ENCODE measurements at regions of chr1 and their contacts with region 1.

Region 1: GRCh38 chr1:43367904-43368645 is at the start of gene ELOVL1:
- DNase-seq: peak; percentile 86
- H3K4me3 Mint-ChIP-seq: peak within 1 kb of the TSS; percentile 97
- H3K27ac Mint-ChIP-seq: peak within 1 kb of the TSS; percentile 88
- H3K4me1 Mint-ChIP-seq: peaks cover 35% of the 10 kb centered on the region
- H3K27me3 Mint-ChIP-seq: no peaks in the 10 kb centered on the region
- total RNA-seq, gene ELOVL1: 82.7 and 83.6 TPM in 2 replicates

Region 2: DNA sequence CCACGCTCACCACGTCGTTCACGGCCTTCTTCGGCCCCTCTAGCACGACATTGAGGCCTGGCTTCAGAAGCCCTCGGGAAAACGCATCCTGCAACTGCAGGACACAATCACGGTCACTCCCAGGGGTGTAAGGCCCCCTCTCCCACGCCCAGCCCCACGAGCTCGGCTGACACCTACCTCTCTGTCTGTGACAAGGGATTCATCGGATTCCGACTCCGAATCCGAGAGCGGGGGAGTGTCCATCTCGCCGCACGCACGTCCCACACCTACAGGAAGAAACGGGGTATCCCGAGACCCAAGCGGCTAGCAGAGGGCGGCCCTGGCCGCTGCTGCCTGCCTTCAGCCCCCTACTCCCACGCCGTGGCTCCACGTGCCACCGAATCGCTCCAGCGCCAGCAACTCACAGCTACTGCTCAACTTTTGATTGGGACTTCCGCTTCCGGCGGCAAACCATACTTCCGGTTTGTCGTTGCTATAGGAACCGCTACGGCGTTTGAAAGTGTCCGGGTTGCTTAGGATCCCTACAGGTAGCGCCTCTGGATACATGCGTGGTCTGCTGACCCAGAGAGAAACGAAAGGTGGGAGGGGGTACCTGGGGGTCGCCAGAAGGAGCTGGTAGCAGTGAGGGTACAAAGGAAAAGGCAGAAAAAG is 196.1 kb before region 1 on chr1 and contains the starts of genes CFAP57 and EBNA1BP2:
- intact Hi-C with region 1: loop called (anchors 5 kb)
- DNase-seq: peak; percentile 90
- H3K4me3 Mint-ChIP-seq: peak within 1 kb of the TSS; percentile 96
- H3K27ac Mint-ChIP-seq: peak within 1 kb of the TSS; percentile 87
- H3K4me1 Mint-ChIP-seq: peaks cover 25% of the 10 kb centered on the region
- H3K27me3 Mint-ChIP-seq: peaks cover 18% of the 10 kb centered on the region
- total RNA-seq, gene CFAP57: 0.11 and 0.16 TPM in 2 replicates
- total RNA-seq, gene EBNA1BP2: 102 and 104 TPM in 2 replicates

Region 3: DNA sequence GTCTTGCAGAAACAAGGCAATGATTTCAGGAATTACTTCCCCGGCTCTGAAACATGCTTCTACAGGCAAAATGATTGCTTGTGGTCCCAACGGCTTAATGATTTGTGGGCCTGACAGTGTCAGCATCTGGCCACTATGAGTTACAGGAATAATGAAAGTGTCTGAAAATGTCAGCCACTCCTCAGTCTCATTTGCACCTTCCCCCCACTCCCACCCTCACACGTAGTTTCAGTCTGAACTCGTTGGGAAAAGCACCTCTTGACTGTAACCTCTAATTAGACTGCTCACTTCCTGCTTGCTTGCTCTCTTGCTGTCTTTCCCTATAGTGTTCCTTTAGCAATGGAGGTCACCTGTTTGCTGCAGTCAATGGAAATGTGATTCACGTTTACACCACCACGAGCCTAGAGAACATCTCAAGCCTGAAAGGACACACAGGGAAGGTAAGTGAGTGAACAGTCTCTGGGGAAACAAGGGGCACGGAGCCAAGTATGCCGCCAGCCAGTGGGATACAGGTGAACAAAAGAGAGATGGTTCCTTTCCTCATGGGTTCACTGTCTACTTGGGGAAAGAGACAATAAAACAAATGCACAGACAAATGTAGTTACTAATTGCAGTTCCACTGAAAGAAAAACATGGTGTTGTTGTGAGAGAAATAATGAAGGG is 168.9 kb before region 1 on chr1:
- intact Hi-C with region 1: no loop called
- DNase-seq: no peak
- H3K4me3 Mint-ChIP-seq: no peak overlapping the region
- H3K27ac Mint-ChIP-seq: no peak overlapping the region
- H3K4me1 Mint-ChIP-seq: no peaks in the 10 kb centered on the region
- H3K27me3 Mint-ChIP-seq: peaks cover 9% of the 10 kb centered on the region

Region 4: DNA sequence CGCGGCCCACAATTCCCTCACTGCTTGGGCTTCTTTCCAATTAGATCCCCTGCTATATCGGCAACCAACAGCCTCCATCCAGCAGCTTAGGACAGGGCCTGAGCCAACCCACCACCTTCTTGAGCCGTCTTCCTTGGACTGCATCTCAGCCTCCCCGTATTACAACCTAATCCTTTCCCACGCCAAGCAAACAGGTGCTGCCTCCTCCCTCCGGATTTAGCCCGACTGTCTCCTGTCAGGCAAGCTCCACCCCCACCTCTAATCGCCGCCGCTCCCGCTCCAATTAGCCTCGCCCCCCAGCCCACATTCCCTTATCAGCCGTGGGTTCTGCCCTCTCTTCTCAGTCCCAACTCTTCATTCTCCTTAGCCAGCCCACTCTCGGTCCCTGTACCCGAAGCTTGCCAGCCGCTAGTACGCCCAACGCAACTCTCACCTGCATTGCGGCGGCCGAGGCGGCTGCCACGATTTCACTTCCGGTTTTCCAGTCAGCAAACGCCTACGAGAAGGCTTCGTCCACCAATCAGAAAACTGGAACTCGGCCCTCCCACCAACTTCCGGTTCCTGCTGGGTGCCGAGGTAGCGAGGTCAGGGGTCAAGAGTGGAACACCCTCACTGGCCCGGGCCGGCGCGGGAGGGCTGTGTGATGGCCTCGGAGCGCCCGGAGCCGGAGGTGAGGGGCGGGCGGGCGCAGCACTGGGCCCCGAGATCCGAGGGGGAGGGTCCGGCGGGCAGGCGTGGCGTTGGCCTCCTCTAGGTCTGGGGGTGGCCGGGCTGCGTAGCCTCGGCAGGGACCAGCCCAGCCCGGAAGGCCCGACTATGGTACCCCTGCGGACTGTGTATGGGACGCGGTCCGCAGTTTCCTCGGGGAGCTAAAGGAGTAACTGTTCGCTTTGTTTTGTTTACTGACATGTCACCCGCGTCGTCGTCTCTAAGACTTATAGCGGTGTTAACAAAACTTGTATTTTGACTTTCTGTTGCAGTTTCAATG is 21.5 kb after region 1 on chr1 and contains the starts of genes MED8 and SZT2:
- intact Hi-C with region 1: loop called (anchors 1 kb)
- DNase-seq: peak; percentile 91
- H3K4me3 Mint-ChIP-seq: peak within 1 kb of the TSS; percentile 100
- H3K27ac Mint-ChIP-seq: peak within 1 kb of the TSS; percentile 88
- H3K4me1 Mint-ChIP-seq: peaks cover 20% of the 10 kb centered on the region
- H3K27me3 Mint-ChIP-seq: no peaks in the 10 kb centered on the region
- total RNA-seq, gene MED8: 40.8 and 41.6 TPM in 2 replicates
- total RNA-seq, gene SZT2: 56.6 and 58.4 TPM in 2 replicates

Region 5: GRCh38 chr1:43414634-43415223 is 46.7 kb after region 1 on chr1:
- intact Hi-C with region 1: no loop called
- DNase-seq: peak; percentile 39
- H3K4me3 Mint-ChIP-seq: no peak overlapping the region
- H3K27ac Mint-ChIP-seq: no peak overlapping the region
- H3K4me1 Mint-ChIP-seq: no peaks in the 10 kb centered on the region
- H3K27me3 Mint-ChIP-seq: no peaks in the 10 kb centered on the region

Region 6: GRCh38 chr1:43427524-43427923 is 59.4 kb after region 1 on chr1:
- intact Hi-C with region 1: no loop called
- DNase-seq: no peak
- H3K4me3 Mint-ChIP-seq: no peak overlapping the region
- H3K27ac Mint-ChIP-seq: no peak overlapping the region
- H3K4me1 Mint-ChIP-seq: peaks cover 2% of the 10 kb centered on the region
- H3K27me3 Mint-ChIP-seq: no peaks in the 10 kb centered on the region

Region 7: DNA sequence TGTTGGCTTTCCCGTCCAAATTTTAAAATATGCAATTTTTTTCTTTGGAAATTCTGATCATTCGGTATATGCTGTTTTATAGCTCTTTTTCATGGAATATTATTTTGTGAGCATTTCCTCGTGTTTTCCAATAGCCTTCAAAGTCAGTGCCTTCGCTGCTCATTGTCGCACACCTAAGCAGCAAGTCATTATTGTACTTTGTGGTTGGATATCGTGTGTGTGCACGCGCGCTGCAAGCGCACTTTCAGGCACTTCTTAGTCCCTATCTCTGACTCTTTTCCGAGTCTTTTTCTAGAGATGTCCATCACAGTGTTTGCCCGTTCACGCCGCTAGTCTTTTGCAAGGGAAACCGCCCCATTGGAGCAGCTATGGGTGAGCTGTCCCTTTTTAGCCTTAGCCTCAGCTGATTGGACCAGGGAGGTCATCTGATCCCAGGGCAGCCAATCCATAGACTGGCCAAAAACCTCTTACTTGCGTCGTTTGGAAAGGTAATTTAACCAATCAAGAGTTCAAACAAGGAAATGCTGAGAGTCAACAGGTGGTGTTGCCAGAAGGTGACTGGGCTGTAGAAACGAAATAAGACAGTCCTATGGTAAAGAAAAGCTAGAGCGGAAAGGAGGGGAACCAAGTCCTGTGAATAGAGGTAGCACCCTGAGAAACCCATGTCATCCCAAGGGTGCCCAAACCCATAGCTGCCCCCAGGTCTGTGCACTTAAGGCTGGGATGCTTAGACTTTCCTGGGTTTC is 86.4 kb after region 1 on chr1:
- intact Hi-C with region 1: loop called (anchors 10 kb)
- DNase-seq: peak; percentile 71
- H3K4me3 Mint-ChIP-seq: peak overlapping the region; percentile 82
- H3K27ac Mint-ChIP-seq: peak overlapping the region; percentile 84
- H3K4me1 Mint-ChIP-seq: peaks cover 17% of the 10 kb centered on the region
- H3K27me3 Mint-ChIP-seq: peaks cover 26% of the 10 kb centered on the region

Measured in activated T-helper 2 cell treated with anti-CD3 and anti-CD28 coated beads, Interferon-gamma antibody, Interleukin-2, Interleukin-4, amounts not matched to agents 10 μg/mL and 5 μg/mL and 100 μg/mL, durations not matched to agents 14 hours and 24 hours and 36 hours (primary cell).